Activated CD4-positive, alpha-beta T cell treated with anti-CD3 and anti-CD28 coated beads, Interleukin-2, amount 10 ng/mL, durations not matched to agents 24 days and 14 days (primary cell): ENCODE measurements at regions of chr1 and their contacts with region 1.

Region 1: GRCh38 chr1:70410604-70411359 is at the start of gene CTH:
- DNase-seq: peak; percentile 98
- H3K4me3 Mint-ChIP-seq: peak within 1 kb of the TSS; percentile 94
- H3K27ac Mint-ChIP-seq: peak within 1 kb of the TSS; percentile 90
- H3K4me1 Mint-ChIP-seq: peaks cover 18% of the 10 kb centered on the region
- H3K27me3 Mint-ChIP-seq: peaks cover 3% of the 10 kb centered on the region
- total RNA-seq, gene CTH: 12.7 and 14.3 TPM in 2 replicates

Region 2: GRCh38 chr1:70221241-70222121 is 189.3 kb before region 1 on chr1 and contains the start of gene SRSF11:
- intact Hi-C with region 1: loop called (anchors 1 kb)
- DNase-seq: peak; percentile 99
- H3K4me3 Mint-ChIP-seq: peak within 1 kb of the TSS; percentile 96
- H3K27ac Mint-ChIP-seq: peak within 1 kb of the TSS; percentile 99
- H3K4me1 Mint-ChIP-seq: peaks cover 33% of the 10 kb centered on the region
- H3K27me3 Mint-ChIP-seq: no peaks in the 10 kb centered on the region
- total RNA-seq, gene SRSF11: 187 and 195 TPM in 2 replicates

Region 3: GRCh38 chr1:70256664-70257063 is 154.1 kb before region 1 on chr1:
- intact Hi-C with region 1: no loop called
- DNase-seq: no peak
- H3K4me3 Mint-ChIP-seq: no peak overlapping the region
- H3K27ac Mint-ChIP-seq: no peak overlapping the region
- H3K4me1 Mint-ChIP-seq: no peaks in the 10 kb centered on the region
- H3K27me3 Mint-ChIP-seq: no peaks in the 10 kb centered on the region

Region 4: DNA sequence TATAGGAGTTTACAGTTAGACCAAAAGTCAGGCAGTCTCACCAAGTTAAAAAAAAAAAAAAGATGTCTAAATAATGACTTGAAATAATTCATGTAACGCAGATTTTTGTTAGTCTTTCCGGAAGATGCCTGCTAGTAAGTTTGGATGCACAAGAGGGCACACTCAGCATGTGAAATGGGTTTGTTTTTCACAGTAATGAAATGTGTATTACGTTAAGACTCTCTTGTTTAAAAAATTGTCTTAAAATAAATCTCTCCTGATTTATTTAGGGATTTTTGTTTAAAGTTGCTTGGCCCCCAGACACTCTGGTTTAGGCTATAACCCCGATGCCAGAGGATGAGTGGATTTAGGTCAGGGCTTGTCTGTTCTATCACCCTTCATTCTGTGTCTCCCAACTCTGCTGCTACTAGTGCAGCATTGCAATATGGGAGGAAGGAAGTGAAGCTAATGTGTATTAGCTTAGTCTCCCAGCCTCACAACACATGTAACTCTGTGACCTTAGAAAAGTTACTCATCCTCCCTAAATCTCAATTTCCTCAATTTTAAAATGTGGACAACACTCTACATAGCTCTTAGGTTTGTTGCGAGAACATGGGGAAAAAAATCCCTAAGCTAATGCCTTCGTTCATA is 26.0 kb after region 1 on chr1:
- intact Hi-C with region 1: loop called (anchors 2 kb)
- DNase-seq: no peak
- H3K4me3 Mint-ChIP-seq: no peak overlapping the region
- H3K27ac Mint-ChIP-seq: no peak overlapping the region
- H3K4me1 Mint-ChIP-seq: peaks cover 12% of the 10 kb centered on the region
- H3K27me3 Mint-ChIP-seq: no peaks in the 10 kb centered on the region

Region 5: DNA sequence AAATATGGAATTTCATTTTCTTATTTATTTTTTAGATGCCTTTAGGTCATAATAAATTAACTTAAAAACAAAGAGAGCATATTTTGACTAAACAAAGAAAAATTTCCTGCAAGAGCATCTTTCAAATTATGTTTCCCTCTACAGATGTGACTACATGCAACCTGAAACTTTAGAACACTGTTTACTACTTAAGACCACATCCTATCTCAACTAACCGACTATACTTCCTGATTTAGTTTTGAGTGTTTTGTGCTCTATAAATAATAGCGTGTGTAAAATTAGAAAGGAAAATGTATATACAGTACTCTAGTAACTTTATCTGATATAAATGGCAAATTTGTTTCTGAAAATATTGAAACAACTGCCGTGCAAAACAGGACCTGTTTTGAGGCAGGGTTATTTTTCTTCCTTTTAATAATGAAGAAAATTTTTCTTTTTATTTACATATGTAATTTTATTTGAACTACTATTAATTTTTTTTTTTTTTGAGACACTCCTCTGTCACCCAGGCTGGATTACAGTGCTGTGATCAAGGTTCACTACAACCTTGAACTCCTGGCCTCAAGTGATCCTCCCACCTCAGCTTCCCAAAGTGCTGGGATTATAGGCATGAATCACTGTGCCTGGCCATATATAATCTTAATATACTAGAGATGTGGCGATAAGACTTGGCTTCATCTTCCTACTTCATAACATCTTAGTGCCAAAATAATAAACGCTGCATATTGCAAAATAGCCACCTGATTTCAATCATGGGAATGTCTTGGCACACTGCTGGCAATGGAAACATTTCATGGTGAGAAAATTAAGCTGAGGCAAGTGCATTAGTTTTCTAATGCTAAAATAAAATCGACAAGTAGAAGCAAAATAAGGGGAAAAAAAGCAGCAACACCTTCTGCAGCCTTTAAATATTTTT is 657.8 kb after region 1 on chr1:
- intact Hi-C with region 1: loop called (anchors 5 kb)
- DNase-seq: no peak
- H3K4me3 Mint-ChIP-seq: peak overlapping the region; percentile 62
- H3K27ac Mint-ChIP-seq: peak overlapping the region; percentile 45
- H3K4me1 Mint-ChIP-seq: peaks cover 21% of the 10 kb centered on the region
- H3K27me3 Mint-ChIP-seq: no peaks in the 10 kb centered on the region